Dorsolateral prefrontal cortex (tissue), 120 donors: ENCODE measurements at regions of chr5 and their contacts with region 1.

Region 1: DNA sequence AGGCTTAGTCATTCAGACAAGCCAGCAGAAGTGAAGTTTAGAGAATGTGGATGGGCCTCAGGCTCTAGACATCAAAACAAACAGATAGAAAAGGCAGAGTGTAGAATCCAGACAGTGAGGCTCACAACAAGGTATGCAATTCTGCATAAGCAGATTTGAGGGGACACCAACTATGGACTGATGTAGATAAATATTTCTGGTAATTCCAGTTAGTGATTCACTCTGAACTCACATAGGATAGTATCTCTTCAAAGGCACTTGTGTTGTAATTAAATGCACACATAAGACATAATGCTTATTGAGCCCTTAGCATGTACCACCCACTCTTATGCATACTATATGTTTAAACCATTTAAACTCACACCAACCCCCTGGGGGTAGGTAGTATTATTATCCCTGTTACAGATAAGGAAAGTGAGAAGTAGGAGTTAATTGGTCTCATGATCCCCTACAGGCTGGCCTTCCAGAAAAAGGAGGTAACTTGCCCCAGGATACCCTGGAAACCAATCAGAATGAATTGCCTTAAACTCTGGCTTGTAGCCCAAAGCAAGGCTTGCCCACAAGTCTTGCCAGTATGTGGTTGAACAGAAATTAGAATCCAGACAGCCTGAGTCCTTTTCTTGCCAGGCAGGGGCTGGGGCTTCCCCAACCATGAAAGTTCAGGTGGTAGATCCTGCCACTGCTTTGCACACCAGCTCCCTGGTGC is 39.5 kb upstream of the HSPB3 start:
- DNase-seq: no peak
- H3K4me3 ChIP-seq: no peak overlapping the region
- H3K27ac ChIP-seq: no peak overlapping the region
- H3K27me3 ChIP-seq: peaks cover 0 to 7% (median 0%) of the 10 kb centered on the region in 45 donors
- CTCF ChIP-seq: no peak

Region 2: GRCh38 chr5:54249210-54250028 is 166.6 kb before region 1 on chr5:
- intact Hi-C with region 1: loop called (anchors 5 to 10 kb)
- DNase-seq: peak in 2 of 10 donors; percentile 9 to 33
- H3K4me3 ChIP-seq: no peak overlapping the region
- H3K27ac ChIP-seq: no peak overlapping the region
- H3K27me3 ChIP-seq: no peaks in the 10 kb centered on the region
- CTCF ChIP-seq: no peak

Region 3: GRCh38 chr5:55021410-55021809 is 605.4 kb after region 1 on chr5:
- intact Hi-C with region 1: no loop called
- DNase-seq: no peak
- H3K4me3 ChIP-seq: no peak overlapping the region
- H3K27ac ChIP-seq: peak overlapping the region in 1 of 59 donors; percentile 29
- H3K27me3 ChIP-seq: no peaks in the 10 kb centered on the region
- CTCF ChIP-seq: no peak